Calu3 (cell line): ENCODE measurements at regions of chr16 and their contacts with region 1.

Region 1: GRCh38 chr16:68040507-68041288 is 17.6 kb downstream of the DUS2 start:
- DNase-seq: peak; percentile 93
- H3K4me3 Mint-ChIP-seq: no peak overlapping the region
- H3K27ac Mint-ChIP-seq: no peak overlapping the region
- H3K4me1 Mint-ChIP-seq: no peaks in the 10 kb centered on the region
- H3K27me3 Mint-ChIP-seq: no peaks in the 10 kb centered on the region
- CTCF ChIP-seq: peak; percentile 83

Region 2: DNA sequence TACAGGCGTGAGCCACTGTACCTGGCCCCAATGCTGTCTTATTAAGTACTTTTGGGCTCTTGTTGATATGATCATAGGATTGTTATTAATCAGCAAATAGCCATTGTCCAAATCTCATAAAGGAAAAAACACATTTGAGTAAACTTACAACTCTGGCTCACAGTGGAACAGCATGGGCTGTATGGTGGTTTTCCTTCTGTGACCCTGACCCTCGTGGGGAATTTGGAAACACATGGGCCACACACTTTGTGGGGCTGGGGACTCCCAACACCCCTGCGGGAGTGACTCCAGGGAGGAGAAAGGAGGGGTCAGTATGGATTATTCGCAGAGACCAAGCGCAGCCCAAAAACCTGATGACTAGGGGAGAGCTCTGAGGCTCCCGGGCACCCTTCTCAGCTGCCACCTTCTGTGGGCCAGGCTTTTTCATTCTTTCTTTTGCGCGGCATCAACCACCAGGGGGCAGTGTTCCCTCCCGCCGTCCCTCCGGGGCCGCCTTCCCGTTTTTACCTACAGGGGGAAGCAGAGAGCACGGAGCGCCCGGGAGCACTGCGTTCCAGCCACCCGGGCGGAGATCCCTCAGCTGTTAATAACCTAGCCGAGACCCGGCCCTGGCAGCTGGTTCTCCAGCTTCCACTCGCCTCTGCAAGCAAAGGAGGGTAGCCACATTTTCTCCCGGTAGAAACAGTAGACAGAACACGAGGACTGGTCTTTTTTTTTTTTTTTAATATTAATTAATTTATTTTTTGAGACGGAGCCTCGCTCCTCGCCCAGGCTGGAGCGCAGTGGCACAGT is 224.3 kb before region 1 on chr16:
- CTCF ChIA-PET with region 1: interaction called, 8 read pairs
- intact Hi-C with region 1: loop called (anchors 5 kb)
- DNase-seq: peak; percentile 95
- H3K4me3 Mint-ChIP-seq: no peak overlapping the region
- H3K27ac Mint-ChIP-seq: no peak overlapping the region
- H3K4me1 Mint-ChIP-seq: no peaks in the 10 kb centered on the region
- H3K27me3 Mint-ChIP-seq: peaks cover 11% of the 10 kb centered on the region
- CTCF ChIP-seq: peak; percentile 99

Region 3: GRCh38 chr16:67993189-67994039 is 47.3 kb before region 1 on chr16:
- CTCF ChIA-PET with region 1: interaction called, 3 read pairs
- intact Hi-C with region 1: loop called (anchors 1 kb)
- DNase-seq: peak; percentile 85
- H3K4me3 Mint-ChIP-seq: peak overlapping the region; percentile 51
- H3K27ac Mint-ChIP-seq: peak overlapping the region; percentile 42
- H3K4me1 Mint-ChIP-seq: peaks cover 6% of the 10 kb centered on the region
- H3K27me3 Mint-ChIP-seq: peaks cover 23% of the 10 kb centered on the region
- CTCF ChIP-seq: peak; percentile 99

Region 4: DNA sequence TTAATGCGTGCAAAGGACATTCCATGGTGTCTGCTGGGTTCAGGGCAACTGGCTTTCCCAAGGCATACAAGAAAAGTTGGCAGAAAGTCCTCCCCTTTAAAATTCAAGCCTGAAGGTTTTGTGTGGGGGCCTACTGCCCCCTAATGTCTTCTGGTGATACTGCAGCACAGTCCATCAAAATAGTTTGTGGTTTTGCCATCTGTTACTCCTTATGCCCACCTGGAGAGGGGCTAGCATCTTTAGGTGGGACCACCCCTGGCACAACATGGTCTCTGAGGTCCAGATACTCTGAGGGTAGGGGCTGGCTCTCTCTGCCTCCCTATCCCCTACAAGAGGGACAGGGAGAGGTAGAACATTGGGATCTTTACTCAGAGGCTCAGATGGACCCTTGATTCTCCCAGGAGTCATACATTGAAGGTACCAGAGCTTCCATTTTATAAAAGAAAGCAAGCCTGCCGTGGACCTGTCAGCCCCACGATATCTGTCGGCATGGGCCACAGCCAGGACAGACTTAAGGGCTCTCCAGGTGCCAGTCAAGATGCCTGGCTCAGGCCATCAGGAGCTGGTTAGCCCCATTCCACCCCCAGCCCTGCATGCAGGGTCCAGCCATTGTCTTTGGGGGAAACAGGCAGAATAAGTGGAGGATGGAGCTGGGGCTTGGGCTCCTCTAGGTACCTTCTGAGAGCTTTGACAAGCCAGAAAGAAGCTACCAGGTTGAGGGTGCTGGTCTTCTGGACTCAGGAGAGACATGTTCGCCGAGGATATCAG is 188.9 kb after region 1 on chr16:
- CTCF ChIA-PET with region 1: interaction called, 3 read pairs
- intact Hi-C with region 1: loop called (anchors 1 kb)
- DNase-seq: peak; percentile 63
- H3K4me3 Mint-ChIP-seq: no peak overlapping the region
- H3K27ac Mint-ChIP-seq: no peak overlapping the region
- H3K4me1 Mint-ChIP-seq: peaks cover 22% of the 10 kb centered on the region
- H3K27me3 Mint-ChIP-seq: no peaks in the 10 kb centered on the region
- CTCF ChIP-seq: peak; percentile 90